Colonic mucosa (tissue), 4 donors: ENCODE measurements at regions of chr12 and their contacts with region 1.

Region 1: GRCh38 chr12:56359851-56360767 is at the start of gene STAT2:
- DNase-seq: peak; percentile 99
- H3K4me3 ChIP-seq: peak within 1 kb of the TSS; percentile 56
- H3K27ac ChIP-seq: peak within 1 kb of the TSS; percentile 91
- H3K4me1 ChIP-seq: peaks cover 5% of the 10 kb centered on the region
- H3K27me3 ChIP-seq: no peaks in the 10 kb centered on the region
- CTCF ChIP-seq: no peak
- total RNA-seq, gene STAT2: 62.6 to 63.2 TPM

Region 2: GRCh38 chr12:56321027-56321426 is 39.1 kb before region 1 on chr12:
- intact Hi-C with region 1: no loop called
- DNase-seq: no peak
- H3K4me3 ChIP-seq: no peak overlapping the region
- H3K27ac ChIP-seq: no peak overlapping the region
- H3K4me1 ChIP-seq: peaks cover 7% of the 10 kb centered on the region
- H3K27me3 ChIP-seq: no peaks in the 10 kb centered on the region
- CTCF ChIP-seq: no peak

Region 3: GRCh38 chr12:56431850-56432249 is 71.7 kb after region 1 on chr12:
- intact Hi-C with region 1: no loop called
- DNase-seq: no peak
- H3K4me3 ChIP-seq: no peak overlapping the region
- H3K27ac ChIP-seq: no peak overlapping the region
- H3K4me1 ChIP-seq: no peaks in the 10 kb centered on the region
- H3K27me3 ChIP-seq: no peaks in the 10 kb centered on the region
- CTCF ChIP-seq: no peak

Region 4: DNA sequence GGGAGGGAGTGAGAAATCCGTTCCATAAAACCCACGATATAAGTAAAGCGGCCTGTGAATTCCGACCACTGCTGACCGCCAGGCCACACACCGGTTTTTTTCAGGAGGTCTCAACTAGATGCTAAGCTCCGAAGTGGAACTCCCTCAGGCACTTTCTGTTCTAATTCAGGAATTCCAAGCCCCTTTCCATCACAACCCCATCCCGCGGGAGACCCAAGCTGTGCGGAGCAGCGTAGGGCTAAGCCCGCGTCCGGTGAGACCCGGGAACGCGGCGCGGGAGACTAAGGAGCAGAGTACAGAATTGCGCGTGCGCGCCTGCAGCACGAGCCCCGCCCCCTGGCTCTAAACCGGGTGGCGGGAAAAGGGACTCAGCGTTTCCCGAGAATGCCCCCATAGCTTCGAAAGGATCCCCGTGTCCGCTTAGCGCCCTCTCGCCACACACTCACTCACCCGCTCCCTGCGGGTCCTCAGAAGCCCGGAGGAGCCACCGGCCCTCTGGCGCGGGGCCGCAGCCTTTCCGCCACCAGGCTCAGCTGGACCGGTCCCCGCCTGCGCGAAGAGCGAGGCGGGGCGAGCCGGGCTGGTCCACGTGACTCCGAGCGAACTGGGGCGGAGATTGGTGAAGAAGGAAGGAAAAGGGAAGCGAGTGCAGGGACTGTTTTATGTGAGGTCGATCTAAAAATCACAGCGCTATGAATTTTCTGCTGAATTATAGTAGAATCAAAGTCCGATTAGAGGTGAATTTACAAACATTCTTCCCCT is 88.9 kb after region 1 on chr12 and contains the start of gene TIMELESS:
- intact Hi-C with region 1: loop called (anchors 5 kb)
- DNase-seq: peak; percentile 93
- H3K4me3 ChIP-seq: peak within 1 kb of the TSS; percentile 58
- H3K27ac ChIP-seq: peak within 1 kb of the TSS; percentile 73
- H3K4me1 ChIP-seq: no peaks in the 10 kb centered on the region
- H3K27me3 ChIP-seq: no peaks in the 10 kb centered on the region
- CTCF ChIP-seq: no peak
- total RNA-seq, gene TIMELESS: 9.1 to 36.4 TPM

Region 5: GRCh38 chr12:56461235-56462159 is 101.4 kb after region 1 on chr12:
- intact Hi-C with region 1: no loop called
- DNase-seq: no peak
- H3K4me3 ChIP-seq: no peak overlapping the region
- H3K27ac ChIP-seq: no peak overlapping the region
- H3K4me1 ChIP-seq: no peaks in the 10 kb centered on the region
- H3K27me3 ChIP-seq: no peaks in the 10 kb centered on the region
- CTCF ChIP-seq: no peak